Mammary epithelial cell (primary cell): ENCODE measurements at regions of chr3 and their contacts with region 1.

Region 1: GRCh38 chr3:160115387-160115786 is 109.8 kb upstream of the C3orf80 start:
- DNase-seq: no peak
- H3K4me3 ChIP-seq: no peak overlapping the region
- H3K27ac ChIP-seq: no peak overlapping the region
- H3K4me1 ChIP-seq: no peaks in the 10 kb centered on the region
- H3K27me3 ChIP-seq: peaks cover 2% of the 10 kb centered on the region
- CTCF ChIP-seq: no peak

Region 2: GRCh38 chr3:160184655-160185054 is 69.3 kb after region 1 on chr3:
- CTCF ChIA-PET with region 1: no interaction called
- dilution Hi-C with region 1: loop called (anchors 5 kb)
- in situ Hi-C with region 1: no loop called
- intact Hi-C with region 1: no loop called
- DNase-seq: no peak
- H3K4me3 ChIP-seq: no peak overlapping the region
- H3K27ac ChIP-seq: no peak overlapping the region
- H3K4me1 ChIP-seq: no peaks in the 10 kb centered on the region
- H3K27me3 ChIP-seq: no peaks in the 10 kb centered on the region
- CTCF ChIP-seq: no peak